Left cardiac atrium (tissue), 4 donors: ENCODE measurements at regions of chr12 and their contacts with region 1.

Region 1: DNA sequence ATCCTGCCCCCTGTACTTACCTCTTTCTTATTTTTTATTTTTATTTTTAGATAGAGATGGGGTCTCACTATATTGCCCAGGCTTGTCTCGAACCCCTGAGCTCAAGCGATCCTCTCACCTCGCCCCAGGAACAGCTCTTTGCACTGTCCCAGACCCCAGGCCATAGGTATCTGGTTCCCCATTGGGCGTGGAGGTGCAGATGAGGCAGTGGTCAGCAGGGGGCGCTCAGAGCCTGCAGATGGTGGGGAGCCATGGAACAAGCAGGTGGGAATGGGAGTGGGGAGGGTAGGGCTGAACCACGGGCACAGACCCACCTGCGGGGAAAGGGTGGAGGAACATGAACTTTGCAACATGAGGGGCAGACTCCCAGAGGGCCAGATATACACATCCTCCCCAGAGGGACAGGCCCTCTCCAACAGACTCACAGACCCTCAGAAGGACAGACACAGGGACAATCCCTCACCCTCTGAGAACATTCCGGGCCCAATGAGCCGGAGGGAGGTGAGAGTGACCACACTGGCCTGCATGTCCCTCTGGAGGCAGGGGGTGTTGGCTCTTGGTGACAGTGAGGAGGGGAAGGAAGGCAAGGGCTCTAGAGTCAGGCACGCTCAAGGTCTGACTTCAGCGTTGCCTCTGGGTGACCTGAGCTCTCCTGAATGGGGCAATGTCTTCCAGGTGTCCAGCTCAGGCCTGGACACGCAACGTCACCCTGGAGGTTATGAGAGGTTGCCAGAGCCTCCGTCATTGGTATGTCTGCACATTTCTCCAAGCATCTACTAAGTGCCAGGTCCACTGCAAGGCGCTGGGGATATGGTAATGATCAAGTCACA is 34.9 kb downstream of the KRT80 start:
- DNase-seq: peak; percentile 75
- ATAC-seq: peak; percentile 60 to 72

Region 2: DNA sequence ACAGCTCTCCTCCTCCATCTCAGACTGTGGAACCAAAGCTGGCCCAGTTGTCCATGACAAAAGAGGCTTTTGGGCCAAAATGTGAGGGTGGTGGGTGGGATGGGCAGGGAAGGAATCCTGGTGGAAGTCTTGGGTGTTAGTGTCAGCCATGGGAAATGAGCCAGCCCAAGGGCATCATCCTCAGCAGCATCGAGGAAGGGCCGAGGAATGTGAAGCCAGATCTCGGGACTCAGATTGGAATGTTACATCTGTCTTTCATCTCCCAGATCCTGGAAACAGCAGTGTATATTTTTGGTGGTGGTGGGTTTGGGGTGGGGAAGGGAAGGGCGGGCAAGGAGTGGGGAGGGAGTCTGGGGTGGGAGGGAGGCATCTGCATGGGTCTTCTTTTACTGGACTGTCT is 162.0 kb before region 1 on chr12:
- intact Hi-C with region 1: no loop called
- DNase-seq: no peak
- ATAC-seq: no peak

Region 3: GRCh38 chr12:52278541-52279421 is 121.8 kb after region 1 on chr12:
- intact Hi-C with region 1: loop called in 1 of 2 experiments (anchors 2 kb)
- DNase-seq: peak; percentile 77
- ATAC-seq: peak; percentile 89 to 94

Region 4: DNA sequence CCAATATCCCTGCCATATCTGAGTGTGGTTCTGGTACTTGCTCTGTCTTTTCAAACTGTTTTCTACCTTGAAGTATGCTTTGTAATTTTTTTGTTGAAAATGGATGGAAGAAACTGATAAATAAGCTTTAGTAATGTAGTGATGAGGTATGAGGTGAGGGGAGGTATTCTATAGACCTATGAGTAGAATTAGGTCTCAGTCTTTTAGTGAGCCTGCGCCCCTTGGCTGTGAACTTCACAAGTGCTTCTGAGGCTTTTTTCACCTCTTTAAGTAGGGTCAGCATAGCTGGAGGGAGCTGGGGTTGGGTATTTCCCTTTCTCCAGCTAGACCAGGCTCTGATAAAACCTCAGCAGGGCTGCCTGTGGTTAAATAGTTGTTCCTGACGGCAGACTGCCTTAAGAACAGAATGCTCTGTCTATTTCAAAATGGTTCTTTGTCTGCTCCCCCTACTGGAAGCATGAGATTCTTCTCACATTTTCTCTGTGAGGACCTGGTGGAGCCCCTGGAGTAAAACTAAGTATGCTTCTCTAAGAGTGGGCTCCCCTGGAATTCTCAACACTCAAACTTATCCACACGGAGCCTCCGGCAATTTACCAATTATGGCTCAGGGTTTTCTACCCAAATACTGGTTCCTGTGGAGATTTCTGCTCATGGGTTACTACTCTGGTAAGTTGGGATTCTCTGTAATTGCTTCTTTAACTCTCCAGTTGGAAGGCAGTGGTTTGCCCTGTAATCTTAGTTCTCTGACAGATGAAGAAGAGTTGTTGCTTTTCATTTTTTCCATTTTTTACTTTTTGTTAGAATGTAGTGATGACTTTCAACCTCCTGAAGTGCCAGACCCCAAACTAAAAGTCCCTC is 350.1 kb after region 1 on chr12:
- intact Hi-C with region 1: loop called in 1 of 2 experiments (anchors 5 kb)
- DNase-seq: no peak
- ATAC-seq: peak; percentile 68 to 77

Region 5: DNA sequence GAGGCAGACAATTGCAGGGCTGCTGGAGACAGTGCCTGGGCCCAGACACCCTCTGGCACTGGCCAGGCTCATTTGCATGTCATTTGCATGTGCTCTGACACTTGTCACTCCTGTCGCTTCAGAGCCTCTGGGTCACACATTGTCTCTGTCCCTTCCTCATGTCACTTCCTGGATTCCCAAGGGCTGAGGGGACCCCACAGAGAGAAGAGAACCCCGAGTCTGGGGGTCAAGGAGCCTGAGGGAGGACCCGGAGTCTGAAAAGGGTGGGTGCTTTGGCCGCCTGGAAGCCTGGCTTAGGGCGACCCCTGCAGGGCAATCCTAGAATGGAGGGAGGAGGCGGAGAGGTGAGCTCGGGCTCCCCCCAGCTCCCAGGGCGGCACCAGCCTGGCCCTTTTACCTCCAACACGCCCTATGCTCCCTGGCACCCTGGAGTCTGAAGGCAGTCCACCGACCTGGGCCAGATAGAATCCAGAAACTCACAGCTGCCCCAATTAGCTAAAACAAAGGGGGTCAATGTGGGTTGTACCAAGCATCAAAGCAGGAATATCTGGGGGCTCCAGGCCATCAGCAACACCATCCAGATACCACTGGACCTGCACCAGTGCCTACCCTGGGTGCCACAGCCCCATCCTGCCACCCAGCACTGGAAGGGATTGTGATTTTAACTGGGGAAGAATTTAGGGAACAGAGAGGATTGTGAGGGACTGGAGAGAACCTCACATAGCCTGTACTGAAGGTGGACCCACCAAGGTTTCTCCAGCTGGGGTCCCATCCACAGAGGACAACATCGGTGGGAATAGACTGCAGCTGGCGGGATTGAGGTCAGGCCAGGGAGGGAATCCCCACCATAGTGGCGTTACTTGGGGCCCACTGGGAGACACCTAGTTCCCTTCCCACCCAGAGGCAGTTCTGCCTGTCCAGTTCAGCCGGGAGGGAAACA is 713.7 kb after region 1 on chr12:
- intact Hi-C with region 1: loop called in 1 of 2 experiments (anchors 5 kb)
- DNase-seq: peak; percentile 60
- ATAC-seq: peak in 1 of 2 donors; percentile 10

Region 6: DNA sequence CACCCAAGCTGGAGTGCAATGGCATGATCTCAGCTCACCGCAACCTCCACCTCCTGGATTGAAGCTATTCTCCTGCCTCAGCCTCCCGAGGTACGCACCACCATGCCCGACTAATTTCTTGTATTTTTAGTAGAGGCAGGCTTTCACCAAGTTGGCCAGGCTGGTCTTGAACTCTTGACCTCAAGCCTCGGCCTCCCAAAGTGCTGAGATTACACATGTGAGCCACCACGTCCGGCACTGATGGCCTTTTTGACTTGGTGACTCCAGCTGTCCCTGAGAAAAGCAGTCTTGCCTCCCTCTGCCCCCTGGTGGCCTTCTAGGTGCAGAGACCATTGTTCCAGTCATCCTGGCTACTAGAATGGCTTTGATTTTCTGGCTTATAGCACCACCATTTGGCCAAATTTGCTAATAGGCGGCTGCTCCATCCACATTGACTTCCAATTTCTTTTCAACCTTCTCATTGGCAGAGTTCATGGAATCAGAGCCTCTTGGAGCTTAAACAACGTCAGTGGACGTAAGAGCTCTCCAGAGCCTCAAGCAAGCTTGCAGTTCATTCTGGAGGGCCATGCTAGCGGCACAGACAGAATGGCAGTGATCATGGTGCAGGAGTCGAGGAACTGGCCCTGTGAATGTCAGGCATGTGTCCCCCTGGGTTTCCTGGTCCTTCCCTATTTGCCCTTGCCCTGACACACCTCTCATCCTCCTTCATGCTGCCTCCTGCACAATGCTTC is 823.9 kb after region 1 on chr12:
- intact Hi-C with region 1: loop called (anchors 5 to 10 kb)
- DNase-seq: peak; percentile 92
- ATAC-seq: peak; percentile 89 to 93